K562 (cell line): ENCODE measurements at regions of chr7 and their contacts with region 1.

Region 1: DNA sequence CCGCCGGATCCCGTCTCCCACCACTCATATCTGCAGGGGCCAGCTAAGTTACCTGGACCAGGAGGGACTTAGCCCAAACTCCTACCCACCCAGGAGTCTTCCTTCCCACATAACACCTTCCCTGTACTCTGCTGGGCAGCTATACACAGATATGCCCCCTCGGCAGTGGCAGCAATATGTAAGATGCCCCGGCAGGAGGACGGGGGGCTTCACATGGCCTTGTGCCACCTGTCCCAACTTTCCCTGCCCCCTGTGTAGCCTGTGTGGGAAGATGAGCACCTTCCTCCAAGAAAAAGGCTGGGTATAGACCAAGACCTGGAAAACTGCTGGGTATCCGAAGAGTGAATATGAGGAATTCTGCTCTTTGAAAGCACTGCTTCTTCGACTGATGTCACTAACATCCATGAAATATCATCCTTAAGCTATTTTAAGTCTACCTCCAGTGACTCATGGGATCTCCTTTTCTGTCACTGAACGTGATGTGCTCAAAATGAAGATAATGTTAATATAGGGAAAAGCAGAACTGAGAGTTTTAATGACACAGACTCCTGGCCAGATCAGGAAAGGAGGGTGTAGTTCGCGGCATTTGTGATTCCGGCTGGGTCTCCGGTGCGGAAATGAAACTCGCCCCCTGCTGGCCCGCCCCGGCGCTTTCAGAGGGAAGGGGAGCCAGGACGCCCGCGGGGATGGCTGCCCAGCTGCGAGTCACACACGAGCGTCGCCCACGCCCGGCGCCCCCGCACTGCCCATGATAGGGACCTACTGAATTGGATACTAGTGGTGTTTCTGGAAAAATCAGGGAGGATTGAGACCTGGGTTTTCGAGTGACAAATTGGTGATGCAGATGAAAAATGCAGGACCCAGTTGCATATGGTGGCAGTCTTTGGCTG is 256.9 kb upstream of the NFE2L3 start:
- DNase-seq: peak; percentile 71 to 79 (median 74)
- ATAC-seq: peak; percentile 87
- H3K4me3 ChIP-seq: peak overlapping the region; percentile 4; the same call in 1 of the 2 replicates
- H3K27ac ChIP-seq: no peak overlapping the region
- H3K4me1 ChIP-seq: peaks cover 4 to 18% of the 10 kb centered on the region in 2 experiments; a peak in 4 of 5 replicates
- H3K27me3 ChIP-seq: no peaks in the 10 kb centered on the region; a peak in 1 of 5 replicates
- CTCF ChIP-seq: peak; percentile 50 to 74 (median 63)
- EP300 ChIP-seq: no peak
- POLR2A ChIP-seq: no peak
- RAD21 ChIP-seq: peak; percentile 62 to 68

Region 2: GRCh38 chr7:25469669-25470068 is 425.5 kb before region 1 on chr7:
- CTCF ChIA-PET with region 1: no interaction called
- POLR2A ChIA-PET with region 1: no interaction called
- in situ Hi-C with region 1: no loop called
- intact Hi-C with region 1: no loop called
- DNase-seq: no peak
- ATAC-seq: no peak
- H3K4me3 ChIP-seq: no peak overlapping the region
- H3K27ac ChIP-seq: no peak overlapping the region
- H3K4me1 ChIP-seq: no peaks in the 10 kb centered on the region
- H3K27me3 ChIP-seq: peaks cover 8 to 9% of the 10 kb centered on the region in 2 experiments; a peak in 4 of 5 replicates
- CTCF ChIP-seq: no peak
- EP300 ChIP-seq: no peak
- POLR2A ChIP-seq: no peak
- RAD21 ChIP-seq: no peak

Region 3: GRCh38 chr7:25908154-25908949 is 13.2 kb after region 1 on chr7:
- CTCF ChIA-PET with region 1: no interaction called
- POLR2A ChIA-PET with region 1: interaction called, 16 read pairs
- in situ Hi-C with region 1: no loop called
- intact Hi-C with region 1: no loop called
- DNase-seq: no peak
- ATAC-seq: no peak
- H3K4me3 ChIP-seq: no peak overlapping the region
- H3K27ac ChIP-seq: no peak overlapping the region
- H3K4me1 ChIP-seq: peaks cover 0 to 5% of the 10 kb centered on the region in 2 experiments; a peak in 3 of 5 replicates
- H3K27me3 ChIP-seq: no peaks in the 10 kb centered on the region
- CTCF ChIP-seq: no peak
- EP300 ChIP-seq: no peak
- POLR2A ChIP-seq: no peak
- RAD21 ChIP-seq: no peak

Region 4: DNA sequence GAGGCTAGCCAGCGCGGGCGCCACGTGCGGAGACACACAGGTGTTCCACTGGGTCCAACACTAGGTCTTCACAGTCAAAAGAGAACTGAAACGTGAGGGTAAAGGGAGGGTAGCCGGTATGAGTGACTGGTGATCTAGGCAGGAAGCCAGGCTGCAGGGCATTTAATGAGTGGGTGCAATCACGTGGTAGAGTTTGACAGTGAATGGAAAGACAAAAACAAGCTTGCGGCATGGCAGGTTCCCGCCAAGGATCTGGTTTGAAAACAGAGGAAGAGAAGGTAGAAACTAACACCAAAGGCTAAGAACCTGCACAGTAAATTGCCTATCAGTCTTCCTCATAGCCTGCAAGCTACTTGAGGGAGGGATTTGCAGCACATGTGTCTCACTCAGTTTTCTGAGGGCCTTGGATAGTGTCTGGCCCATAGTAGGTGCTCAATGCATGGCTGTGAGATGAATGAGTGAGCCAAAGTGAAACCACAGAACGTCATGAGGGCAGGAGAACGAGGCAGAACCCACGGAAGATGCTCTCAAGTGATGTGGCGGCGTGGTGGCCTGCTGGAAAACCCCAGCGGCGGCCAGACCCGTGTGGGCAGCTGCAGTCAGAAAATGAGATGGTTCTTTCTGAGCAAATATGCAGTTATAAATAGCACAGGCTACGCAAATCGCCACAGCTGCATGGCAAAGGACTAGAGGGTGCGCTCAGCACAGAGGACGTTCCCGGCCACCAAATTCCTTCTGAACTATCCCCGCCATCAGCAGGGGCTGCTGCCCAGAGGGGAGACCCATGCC is 73.3 kb after region 1 on chr7:
- CTCF ChIA-PET with region 1: no interaction called
- POLR2A ChIA-PET with region 1: no interaction called
- in situ Hi-C with region 1: no loop called
- intact Hi-C with region 1: no loop called
- DNase-seq: no peak
- ATAC-seq: peak; percentile 33; the same call in 1 of the 3 replicates
- H3K4me3 ChIP-seq: no peak overlapping the region
- H3K27ac ChIP-seq: no peak overlapping the region
- H3K4me1 ChIP-seq: no peaks in the 10 kb centered on the region; a peak in 1 of 5 replicates
- H3K27me3 ChIP-seq: peaks cover 23 to 32% of the 10 kb centered on the region in 2 experiments; a peak in 4 of 5 replicates
- CTCF ChIP-seq: no peak
- EP300 ChIP-seq: no peak
- POLR2A ChIP-seq: no peak
- RAD21 ChIP-seq: no peak

Region 5: DNA sequence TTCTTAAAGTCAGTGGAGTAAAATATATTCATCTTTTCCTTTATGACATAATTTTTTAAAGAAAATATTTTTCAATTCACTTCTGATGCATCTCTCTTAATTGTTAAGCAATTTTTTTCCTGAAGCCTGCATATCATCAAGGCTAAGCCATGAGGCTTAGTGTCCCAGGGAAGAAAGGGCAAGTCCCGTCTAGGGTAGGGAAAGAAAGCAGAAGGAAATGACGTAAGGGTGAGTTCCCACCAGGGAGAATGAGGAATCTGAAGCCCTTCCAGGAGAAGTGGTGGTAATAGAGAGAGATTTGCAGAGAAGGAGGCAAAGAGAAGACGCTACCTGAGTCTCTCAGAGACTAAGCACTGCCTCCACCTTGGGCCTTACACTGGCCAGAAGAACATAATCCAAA is 160.1 kb after region 1 on chr7:
- CTCF ChIA-PET with region 1: no interaction called
- POLR2A ChIA-PET with region 1: no interaction called
- in situ Hi-C with region 1: loop called (anchors 5 kb)
- intact Hi-C with region 1: no loop called
- DNase-seq: no peak
- ATAC-seq: no peak
- H3K4me3 ChIP-seq: no peak overlapping the region
- H3K27ac ChIP-seq: no peak overlapping the region
- H3K4me1 ChIP-seq: no peaks in the 10 kb centered on the region
- H3K27me3 ChIP-seq: peaks cover 14 to 26% of the 10 kb centered on the region in 2 experiments
- CTCF ChIP-seq: no peak
- EP300 ChIP-seq: no peak
- POLR2A ChIP-seq: no peak
- RAD21 ChIP-seq: no peak

Region 6: GRCh38 chr7:26200444-26201246 is 305.5 kb after region 1 on chr7 and contains the start of gene HNRNPA2B1:
- CTCF ChIA-PET with region 1: no interaction called
- POLR2A ChIA-PET with region 1: interaction called, 4 read pairs
- in situ Hi-C with region 1: no loop called
- intact Hi-C with region 1: loop called (anchors 10 kb)
- DNase-seq: peak; percentile 63 to 98 (median 74)
- ATAC-seq: peak; percentile 65
- H3K4me3 ChIP-seq: peak within 1 kb of the TSS; percentile 76
- H3K27ac ChIP-seq: peak within 1 kb of the TSS; percentile 97
- H3K4me1 ChIP-seq: peaks cover 0 to 25% of the 10 kb centered on the region in 2 experiments; a peak in 2 of 5 replicates
- H3K27me3 ChIP-seq: no peaks in the 10 kb centered on the region
- CTCF ChIP-seq: no peak; a peak in 1 of 6 replicates
- EP300 ChIP-seq: peak; percentile 9; the same call in 1 of the 2 replicates
- POLR2A ChIP-seq: peak; percentile 100
- RAD21 ChIP-seq: no peak
- polyA plus RNA-seq, gene HNRNPA2B1: 865 to 1,390 TPM

Region 7: DNA sequence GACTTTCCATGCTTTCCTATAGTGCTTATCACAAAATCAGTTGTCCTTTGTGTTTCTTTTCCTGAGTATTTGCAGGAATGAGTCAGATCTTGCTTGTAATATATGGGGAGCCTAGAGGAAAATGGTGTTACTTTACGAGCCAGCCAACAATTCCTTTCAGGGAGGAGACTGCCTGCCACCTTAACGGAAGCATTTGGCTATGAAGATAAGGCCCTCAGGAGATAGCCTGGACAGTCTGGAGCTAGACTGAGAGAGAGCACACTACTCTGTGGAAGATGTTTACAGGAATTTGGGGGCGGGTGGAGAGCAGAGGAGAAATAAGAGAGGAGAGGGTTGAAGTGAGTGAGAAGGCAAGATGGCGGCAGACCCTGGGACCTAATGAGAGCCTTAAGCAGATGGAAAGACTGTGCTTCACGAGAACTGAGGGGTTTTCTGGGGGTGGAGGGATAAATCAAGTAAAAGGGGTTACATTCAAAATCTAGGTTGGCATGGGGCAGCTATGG is 522.8 kb after region 1 on chr7:
- CTCF ChIA-PET with region 1: no interaction called
- POLR2A ChIA-PET with region 1: no interaction called
- in situ Hi-C with region 1: no loop called
- intact Hi-C with region 1: no loop called
- DNase-seq: peak; percentile 53 to 90 (median 72)
- ATAC-seq: peak; percentile 96
- H3K4me3 ChIP-seq: no peak overlapping the region; the same call in 1 of the 2 replicates
- H3K27ac ChIP-seq: peak overlapping the region; percentile 80
- H3K4me1 ChIP-seq: peaks cover 7 to 46% of the 10 kb centered on the region in 2 experiments
- H3K27me3 ChIP-seq: no peaks in the 10 kb centered on the region
- CTCF ChIP-seq: no peak
- EP300 ChIP-seq: peak; percentile 92
- POLR2A ChIP-seq: peak; percentile 73
- RAD21 ChIP-seq: 0 out of 4 replicates have a peak, but pooled peaks of 1 of the 2 experiments have one; percentile 13

Region 8: GRCh38 chr7:26500749-26501352 is 605.7 kb after region 1 on chr7:
- CTCF ChIA-PET with region 1: no interaction called
- POLR2A ChIA-PET with region 1: no interaction called
- in situ Hi-C with region 1: loop called (anchors 25 kb)
- intact Hi-C with region 1: loop called (anchors 5 kb)
- DNase-seq: peak in 2 of 4 experiments; percentile 39 to 55
- ATAC-seq: peak; percentile 79
- H3K4me3 ChIP-seq: no peak overlapping the region
- H3K27ac ChIP-seq: no peak overlapping the region
- H3K4me1 ChIP-seq: peaks cover 3 to 8% of the 10 kb centered on the region in 2 experiments; a peak in 3 of 5 replicates
- H3K27me3 ChIP-seq: peaks cover 13 to 16% of the 10 kb centered on the region in 2 experiments; a peak in 4 of 5 replicates
- CTCF ChIP-seq: peak; percentile 39 to 83 (median 61); a peak in 5 of 6 replicates
- EP300 ChIP-seq: no peak
- POLR2A ChIP-seq: no peak
- RAD21 ChIP-seq: peak; percentile 86 to 89

Region 9: GRCh38 chr7:27160546-27161213 is 1265.5 kb after region 1 on chr7:
- CTCF ChIA-PET with region 1: interaction called, 3 read pairs
- POLR2A ChIA-PET with region 1: no interaction called
- in situ Hi-C with region 1: loop called (anchors 25 kb)
- intact Hi-C with region 1: loop called (anchors 5 kb)
- DNase-seq: peak; percentile 81 to 88 (median 84)
- ATAC-seq: peak; percentile 89
- H3K4me3 ChIP-seq: peak overlapping the region; percentile 14
- H3K27ac ChIP-seq: no peak overlapping the region
- H3K4me1 ChIP-seq: peaks cover 0 to 26% of the 10 kb centered on the region in 2 experiments; a peak in 2 of 5 replicates
- H3K27me3 ChIP-seq: peaks cover 18 to 76% of the 10 kb centered on the region in 2 experiments
- CTCF ChIP-seq: peak; percentile 87 to 91 (median 91)
- EP300 ChIP-seq: no peak
- POLR2A ChIP-seq: no peak
- RAD21 ChIP-seq: peak; percentile 89 to 91